Activated naive CD8-positive, alpha-beta T cell treated with anti-CD3 and anti-CD28 coated beads, Interleukin-2, amount 10 ng/mL, durations not matched to agents 7 days and 5 days (primary cell): ENCODE measurements at regions of chr6 and their contacts with region 1.

Region 1: DNA sequence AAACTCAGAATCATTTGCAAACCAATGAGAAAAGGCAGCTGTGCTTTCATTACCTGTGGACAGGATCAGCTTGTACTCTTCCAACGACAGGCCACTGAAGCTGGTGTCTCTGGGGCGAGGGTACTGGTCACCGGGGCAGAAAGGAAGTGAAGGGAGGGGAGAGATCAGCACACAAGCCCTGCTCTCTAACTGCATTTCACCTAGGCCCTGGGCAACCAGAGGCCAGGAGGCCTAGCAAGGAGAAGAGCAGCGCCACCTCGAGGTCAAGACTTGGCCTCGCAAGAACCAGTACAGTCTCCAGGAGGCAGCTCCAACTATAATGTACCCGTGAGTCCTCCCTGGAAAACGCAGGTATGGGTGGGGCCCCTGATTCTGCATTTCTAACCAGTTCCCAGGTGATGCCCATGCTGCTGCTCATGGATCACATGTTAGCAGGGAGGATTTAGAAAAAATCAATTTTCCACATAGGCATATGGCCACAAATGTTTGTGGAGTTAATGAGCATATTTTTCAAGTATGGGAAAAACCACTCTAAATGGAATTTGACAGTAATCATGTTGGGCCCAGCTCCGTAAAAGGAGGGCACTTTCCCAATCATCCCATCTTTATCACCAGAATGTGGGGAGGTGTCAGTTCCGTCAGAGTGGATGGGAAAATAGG is 11.0 kb downstream of the UQCC2 start:
- DNase-seq: peak; percentile 76
- ATAC-seq: peak; percentile 71
- H3K4me3 Mint-ChIP-seq: no peak overlapping the region
- H3K27ac Mint-ChIP-seq: peak overlapping the region; percentile 7
- H3K4me1 Mint-ChIP-seq: peaks cover 37% of the 10 kb centered on the region
- H3K27me3 Mint-ChIP-seq: no peaks in the 10 kb centered on the region

Region 2: GRCh38 chr6:33711140-33712129 is 10.9 kb after region 1 on chr6 and contains the start of gene UQCC2:
- POLR2A ChIA-PET with region 1: interaction called, 11 read pairs
- DNase-seq: peak; percentile 97
- ATAC-seq: peak; percentile 99
- H3K4me3 Mint-ChIP-seq: peak within 1 kb of the TSS; percentile 96
- H3K27ac Mint-ChIP-seq: peak within 1 kb of the TSS; percentile 96
- H3K4me1 Mint-ChIP-seq: peaks cover 31% of the 10 kb centered on the region
- H3K27me3 Mint-ChIP-seq: peaks cover 8% of the 10 kb centered on the region
- total RNA-seq, gene UQCC2: 60.9 to 64.0 TPM